ENCODE measurements at regions of chr20 and their contacts with region 1.

Region 1: GRCh38 chr20:64057628-64058498 is 5.1 kb upstream of the TCEA2 start:
- DNase-seq: peak in 4 of 5 donors; percentile 82 to 93 (median 89)
- H3K4me3 ChIP-seq: peak overlapping the region in 1 of 3 donors; percentile 29
- H3K27ac ChIP-seq: peak overlapping the region; percentile 7 to 68
- H3K4me1 ChIP-seq: peaks cover 0 to 27% (median 0%) of the 10 kb centered on the region in 3 donors
- H3K27me3 ChIP-seq: no peaks in the 10 kb centered on the region
- CTCF ChIP-seq: peak; percentile 72

Region 2: DNA sequence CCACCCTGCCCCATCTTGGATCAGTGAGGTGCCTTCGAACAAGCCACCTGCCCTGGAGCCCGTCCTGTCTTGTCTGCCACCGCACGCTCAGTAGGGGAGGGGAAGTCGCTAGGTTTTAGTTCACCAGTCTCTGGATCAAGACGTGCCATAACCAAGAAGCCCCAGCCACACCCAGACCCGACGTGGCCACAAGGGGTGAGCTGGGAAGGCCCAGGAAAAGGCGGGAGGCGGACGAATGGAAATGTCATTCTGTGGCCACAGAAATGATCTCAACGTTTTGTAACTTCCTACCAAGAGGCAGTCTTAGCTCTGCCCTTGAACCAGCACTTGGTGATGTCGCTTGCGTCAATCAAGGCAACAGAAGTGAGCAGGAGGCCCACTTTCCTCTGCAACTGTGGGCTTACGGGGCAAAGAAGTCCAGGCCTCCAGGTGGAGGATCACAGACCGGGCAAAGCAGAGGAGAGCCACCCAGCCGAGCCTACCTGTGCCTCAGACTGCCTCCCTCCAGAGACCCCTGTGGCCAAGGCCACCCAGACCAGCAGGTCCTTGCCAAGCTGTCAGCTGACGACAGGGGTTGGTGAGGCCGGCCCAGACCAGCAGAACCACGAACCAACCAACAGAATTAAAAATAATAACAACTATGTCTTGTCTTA is 445.5 kb before region 1 on chr20:
- intact Hi-C with region 1: no loop called
- DNase-seq: peak in 1 of 5 donors; percentile 55
- H3K4me3 ChIP-seq: no peak overlapping the region
- H3K27ac ChIP-seq: no peak overlapping the region
- H3K4me1 ChIP-seq: no peaks in the 10 kb centered on the region
- H3K27me3 ChIP-seq: no peaks in the 10 kb centered on the region
- CTCF ChIP-seq: no peak

Region 3: GRCh38 chr20:63624486-63624885 is 433.4 kb before region 1 on chr20:
- intact Hi-C with region 1: loop called (anchors 5 kb)
- DNase-seq: peak in 1 of 5 donors; percentile 12
- H3K4me3 ChIP-seq: no peak overlapping the region
- H3K27ac ChIP-seq: no peak overlapping the region
- H3K4me1 ChIP-seq: peaks cover 0 to 7% (median 5%) of the 10 kb centered on the region in 3 donors
- H3K27me3 ChIP-seq: no peaks in the 10 kb centered on the region
- CTCF ChIP-seq: no peak